A673 (cell line): ENCODE measurements at regions of chr11 and their contacts with region 1.

Region 1: GRCh38 chr11:74321487-74322188 is 10.2 kb upstream of the P4HA3 start:
- DNase-seq: peak; percentile 57
- H3K4me3 ChIP-seq: no peak overlapping the region
- H3K27ac ChIP-seq: no peak overlapping the region
- H3K4me1 ChIP-seq: peaks cover 13% of the 10 kb centered on the region
- H3K27me3 ChIP-seq: no peaks in the 10 kb centered on the region
- CTCF ChIP-seq: peak; percentile 84

Region 2: DNA sequence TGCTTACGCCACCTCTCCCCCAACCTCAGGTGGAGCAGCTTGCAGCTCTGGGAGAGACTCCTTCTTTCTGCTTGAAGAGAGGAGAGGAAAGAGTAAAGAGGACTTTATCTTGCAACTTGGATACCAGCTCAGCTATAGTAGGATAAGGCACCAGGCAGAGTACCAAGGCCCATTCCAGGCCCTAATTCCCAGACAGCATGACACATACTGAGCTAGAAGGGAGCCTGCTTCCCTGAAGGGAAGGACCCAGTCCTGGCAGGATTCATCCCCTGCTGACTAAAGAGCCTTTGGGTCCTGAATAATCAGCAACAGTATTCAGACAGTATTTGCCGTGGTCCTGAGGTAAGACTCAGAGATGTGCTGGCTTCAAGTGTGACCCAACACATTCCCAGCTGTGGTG is 109.1 kb before region 1 on chr11:
- CTCF ChIA-PET with region 1: no interaction called
- POLR2A ChIA-PET with region 1: no interaction called
- intact Hi-C with region 1: no loop called
- DNase-seq: no peak
- H3K4me3 ChIP-seq: no peak overlapping the region
- H3K27ac ChIP-seq: no peak overlapping the region
- H3K4me1 ChIP-seq: no peaks in the 10 kb centered on the region
- H3K27me3 ChIP-seq: no peaks in the 10 kb centered on the region
- CTCF ChIP-seq: no peak

Region 3: DNA sequence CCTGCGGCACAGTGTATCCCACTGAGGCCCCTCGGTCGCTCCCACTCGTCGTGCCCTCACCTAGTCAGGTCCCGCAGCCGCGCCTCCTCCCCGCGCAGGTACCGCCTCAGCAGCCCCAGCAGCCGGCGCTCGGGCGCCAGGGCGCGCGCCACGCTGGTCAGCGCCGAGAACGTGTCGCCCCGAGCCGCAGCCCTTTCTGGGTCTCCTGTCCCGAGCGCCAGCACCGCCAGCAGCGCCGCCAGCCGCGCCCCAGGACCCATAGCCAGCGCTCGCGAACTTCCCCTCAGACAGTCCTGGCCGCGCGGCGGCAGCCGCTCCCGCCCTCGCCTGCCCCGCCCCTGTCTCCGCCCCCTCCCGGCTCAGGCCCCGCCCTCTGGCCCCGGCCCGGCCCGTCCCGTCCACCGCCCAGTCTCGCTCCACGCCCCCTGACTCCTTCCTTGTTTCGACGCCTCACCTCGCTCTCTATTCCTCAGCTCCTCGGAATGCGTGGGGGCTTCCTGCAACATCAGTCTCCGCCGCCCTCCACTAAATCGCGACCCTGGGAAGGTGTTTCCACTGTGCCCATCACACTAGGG is 10.2 kb before region 1 on chr11 and contains the start of gene P4HA3:
- CTCF ChIA-PET with region 1: no interaction called
- POLR2A ChIA-PET with region 1: no interaction called
- intact Hi-C with region 1: no loop called
- DNase-seq: peak; percentile 59
- H3K4me3 ChIP-seq: peak within 1 kb of the TSS; percentile 46
- H3K27ac ChIP-seq: no peak within 1 kb of the TSS
- H3K4me1 ChIP-seq: no peaks in the 10 kb centered on the region
- H3K27me3 ChIP-seq: no peaks in the 10 kb centered on the region
- CTCF ChIP-seq: no peak; the same call in 1 of the 2 replicates
- total RNA-seq, gene P4HA3: 0.52 and 2.0 TPM in 2 replicates

Region 4: DNA sequence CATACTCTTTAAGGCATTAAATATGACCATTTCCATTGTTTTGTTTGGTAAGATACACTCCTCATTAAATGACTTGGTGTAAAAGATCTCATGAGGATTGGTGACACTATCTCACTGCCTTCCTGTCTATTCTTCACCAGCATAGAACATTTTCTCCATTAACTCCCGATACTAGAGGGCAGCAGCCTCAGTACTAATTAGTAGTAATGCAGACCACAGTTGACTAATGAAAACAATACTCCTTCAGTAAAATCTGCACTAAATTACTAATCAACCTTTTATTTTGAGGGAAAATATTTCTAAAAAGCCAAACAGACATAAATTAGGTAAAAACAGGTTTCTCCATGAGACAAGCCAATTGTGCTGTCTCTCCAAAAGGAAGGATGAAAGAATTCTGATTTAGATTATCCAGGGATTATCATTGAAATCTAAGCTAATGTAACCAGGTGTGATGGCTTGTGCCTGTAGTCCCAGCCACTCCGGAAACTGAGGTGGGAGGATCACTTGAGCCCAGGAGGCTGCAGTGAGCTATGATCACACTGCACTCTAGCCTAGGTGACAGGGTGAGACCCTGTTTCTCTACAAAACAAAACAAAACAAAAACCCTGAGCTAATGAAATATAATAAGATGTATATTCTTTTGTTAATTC is 67.2 kb after region 1 on chr11:
- CTCF ChIA-PET with region 1: no interaction called
- POLR2A ChIA-PET with region 1: no interaction called
- intact Hi-C with region 1: no loop called
- DNase-seq: peak; percentile 82
- H3K4me3 ChIP-seq: no peak overlapping the region
- H3K27ac ChIP-seq: no peak overlapping the region
- H3K4me1 ChIP-seq: peaks cover 12% of the 10 kb centered on the region
- H3K27me3 ChIP-seq: no peaks in the 10 kb centered on the region
- CTCF ChIP-seq: peak; percentile 95

Region 5: DNA sequence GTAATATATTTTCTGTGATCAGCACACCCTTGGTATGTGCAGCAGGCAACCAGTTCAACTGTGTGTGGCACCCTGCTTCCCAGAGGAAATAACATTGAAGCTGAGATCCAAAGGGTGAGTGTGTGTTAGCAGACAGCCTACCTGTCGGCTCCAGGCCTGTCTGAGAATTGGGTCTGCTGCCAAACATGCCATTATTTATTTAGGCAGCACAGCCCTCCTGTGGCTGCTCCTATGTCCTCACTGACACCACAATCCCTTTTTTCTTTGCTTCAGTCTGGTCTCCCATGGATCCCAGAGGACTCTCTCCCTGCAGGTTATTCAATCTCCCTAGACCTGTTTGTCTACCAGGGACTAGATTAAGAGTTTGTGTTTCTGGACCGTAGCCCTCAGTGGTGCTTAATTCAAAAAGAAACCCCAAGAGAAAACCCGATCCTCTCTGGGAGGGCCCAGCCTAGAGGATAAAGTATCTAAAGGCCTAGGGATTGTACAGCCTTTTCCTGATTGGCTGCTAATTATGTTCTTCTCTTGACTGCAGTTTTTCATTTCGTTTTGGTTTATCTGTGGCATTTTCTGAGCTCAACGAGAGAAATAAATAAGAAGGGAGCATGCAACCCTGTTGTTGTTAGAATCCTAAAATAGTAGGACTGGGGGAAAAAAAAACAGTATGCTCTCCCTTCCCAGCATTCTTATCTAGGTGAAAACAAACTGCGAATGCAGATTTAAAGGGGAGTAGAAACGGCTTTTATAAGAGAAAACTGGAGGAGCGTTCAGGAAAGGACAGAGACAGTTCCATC is 121.6 kb after region 1 on chr11:
- CTCF ChIA-PET with region 1: no interaction called
- POLR2A ChIA-PET with region 1: no interaction called
- intact Hi-C with region 1: loop called (anchors 5 kb)
- DNase-seq: peak; percentile 61
- H3K4me3 ChIP-seq: no peak overlapping the region
- H3K27ac ChIP-seq: no peak overlapping the region
- H3K4me1 ChIP-seq: peaks cover 25% of the 10 kb centered on the region
- H3K27me3 ChIP-seq: no peaks in the 10 kb centered on the region
- CTCF ChIP-seq: peak; percentile 44